Heart right ventricle (tissue), 16 donors: ENCODE measurements at regions of chrX and their contacts with region 1.

Region 1: GRCh38 chrX:1649621-1650020 is 34.8 kb downstream of the ASMT start:
- DNase-seq: no peak
- ATAC-seq: no peak
- H3K4me3 ChIP-seq: no peak overlapping the region
- H3K27ac ChIP-seq: no peak overlapping the region
- H3K4me1 ChIP-seq: no peaks in the 10 kb centered on the region
- H3K27me3 ChIP-seq: peaks cover 0 to 22% (median 0%) of the 10 kb centered on the region in 7 donors
- CTCF ChIP-seq: no peak

Region 2: DNA sequence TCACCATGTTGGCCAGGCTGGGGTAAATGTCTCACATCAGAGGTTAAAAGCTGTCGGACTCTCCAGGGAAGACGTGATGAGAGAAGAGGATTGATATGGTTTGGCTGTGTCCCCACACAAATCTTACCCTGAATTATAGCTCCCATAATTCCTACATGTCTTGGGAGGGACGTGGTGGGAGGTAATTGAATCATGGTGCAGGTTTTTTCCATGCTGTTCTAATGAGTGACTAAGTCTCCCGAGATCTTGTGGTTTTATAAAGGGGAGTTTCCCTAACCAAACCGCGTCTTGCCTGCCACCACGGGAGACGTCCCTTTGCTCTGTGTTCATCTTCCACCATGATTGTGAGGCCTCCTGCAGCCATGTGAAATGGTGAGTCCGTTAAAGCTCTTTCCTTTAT is 29.6 kb after region 1 on chrX:
- intact Hi-C with region 1: no loop called
- DNase-seq: no peak
- ATAC-seq: no peak
- H3K4me3 ChIP-seq: no peak overlapping the region
- H3K27ac ChIP-seq: no peak overlapping the region
- H3K4me1 ChIP-seq: no peaks in the 10 kb centered on the region
- H3K27me3 ChIP-seq: peaks cover 0 to 1% (median 0%) of the 10 kb centered on the region in 7 donors
- CTCF ChIP-seq: no peak

Region 3: DNA sequence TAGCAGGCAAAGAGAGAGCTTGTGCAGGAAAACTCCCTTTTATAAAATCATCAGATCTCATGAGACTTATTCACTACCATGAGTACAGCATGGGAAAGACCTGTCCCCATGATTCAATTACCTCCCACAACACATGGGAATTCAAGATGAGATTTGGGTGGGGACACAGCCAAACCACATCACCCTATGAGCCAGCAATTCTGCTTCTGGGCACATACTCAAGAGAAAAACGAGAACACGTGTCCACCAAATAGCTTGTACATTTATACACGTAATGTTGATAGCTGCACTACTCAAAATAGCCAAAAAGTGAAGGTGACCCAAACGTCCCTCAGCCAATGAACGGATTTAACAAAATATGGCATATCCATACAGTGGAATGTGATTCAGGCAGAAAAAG is 945.6 kb after region 1 on chrX:
- intact Hi-C with region 1: loop called in 9 of 10 experiments (anchors 2 to 10 kb)
- DNase-seq: no peak
- ATAC-seq: peak in 1 of 8 donors; percentile 12
- H3K4me3 ChIP-seq: no peak overlapping the region
- H3K27ac ChIP-seq: no peak overlapping the region
- H3K4me1 ChIP-seq: peaks cover 0 to 11% (median 0%) of the 10 kb centered on the region in 9 donors
- H3K27me3 ChIP-seq: no peaks in the 10 kb centered on the region
- CTCF ChIP-seq: no peak

Region 4: DNA sequence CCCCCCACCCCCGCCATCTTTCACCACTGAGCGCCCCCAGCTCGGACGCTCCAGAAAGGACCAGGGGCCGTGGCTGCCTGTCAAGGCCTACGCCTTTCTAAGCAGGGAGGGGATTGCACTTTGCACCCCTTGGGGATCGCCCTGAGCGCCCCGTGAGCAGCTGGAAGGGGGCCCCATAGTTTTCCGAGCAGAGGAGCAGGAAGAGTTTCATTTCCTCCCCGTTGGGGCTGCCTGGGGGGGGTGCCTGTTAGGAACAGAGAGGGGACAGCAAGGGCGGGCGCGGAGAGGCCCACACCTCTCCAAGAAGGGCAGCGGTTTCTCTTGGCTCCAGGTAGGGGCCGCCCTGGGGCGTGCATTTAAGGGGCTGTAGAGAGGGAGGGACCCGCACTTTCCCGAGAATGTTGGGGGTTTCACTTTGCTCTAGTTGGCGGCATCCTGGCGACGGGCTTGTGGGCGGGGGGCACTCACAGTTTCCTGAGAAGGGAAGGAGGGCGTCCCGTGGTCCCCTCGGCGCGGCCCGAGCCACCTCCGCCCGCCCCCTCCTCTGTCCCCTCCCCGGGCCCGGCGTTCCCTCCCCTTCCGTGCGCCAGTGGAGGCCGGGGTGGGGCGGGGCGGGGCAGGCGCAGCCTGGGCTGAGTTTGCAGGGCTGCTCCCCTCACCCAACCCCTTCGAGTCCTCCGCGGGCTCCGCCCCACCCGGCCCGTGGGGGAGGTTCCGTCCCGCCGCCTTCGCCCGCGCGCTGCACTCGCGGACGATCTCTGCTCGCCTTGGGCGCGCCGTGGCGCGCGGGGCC is 959.2 kb after region 1 on chrX:
- intact Hi-C with region 1: loop called in 1 of 10 experiments (anchors 5 kb)
- DNase-seq: peak; percentile 86 to 92
- ATAC-seq: peak; percentile 96 to 99 (median 98)
- H3K4me3 ChIP-seq: peak overlapping the region; percentile 62 to 94 (median 83)
- H3K27ac ChIP-seq: peak overlapping the region in 9 of 10 donors; percentile 54 to 93 (median 82)
- H3K4me1 ChIP-seq: peaks cover 0 to 26% (median 11%) of the 10 kb centered on the region in 9 donors
- H3K27me3 ChIP-seq: no peaks in the 10 kb centered on the region
- CTCF ChIP-seq: no peak

Region 5: GRCh38 chrX:2819345-2820135 is 1169.9 kb after region 1 on chrX:
- intact Hi-C with region 1: loop called in 3 of 10 experiments (anchors 10 kb)
- DNase-seq: no peak
- ATAC-seq: no peak
- H3K4me3 ChIP-seq: no peak overlapping the region
- H3K27ac ChIP-seq: no peak overlapping the region
- H3K4me1 ChIP-seq: no peaks in the 10 kb centered on the region
- H3K27me3 ChIP-seq: peaks cover 0 to 27% (median 0%) of the 10 kb centered on the region in 7 donors
- CTCF ChIP-seq: peak in 8 of 9 donors; percentile 13 to 59 (median 48)